Gastrocnemius medialis (tissue), 4 donors: ENCODE measurements at regions of chr11 and their contacts with region 1.

Region 1: DNA sequence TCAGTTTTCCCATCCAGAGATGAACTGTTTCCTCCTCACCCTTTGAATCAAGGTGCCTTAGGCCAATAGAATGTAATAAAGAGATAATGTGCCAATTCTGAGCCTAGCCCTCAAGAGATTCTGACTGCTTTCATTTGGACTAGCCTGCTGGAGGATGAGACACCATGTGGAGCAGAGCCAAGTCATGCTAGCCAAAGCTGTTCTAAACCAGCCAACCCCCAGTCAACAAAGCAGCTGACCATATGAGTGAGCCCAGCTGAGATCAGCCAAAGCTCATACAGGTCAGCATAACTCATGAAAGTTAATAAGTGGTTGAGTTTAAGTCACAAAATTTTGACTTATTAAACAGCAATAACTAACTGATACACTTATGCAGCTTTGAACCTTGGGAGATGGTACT is 66.7 kb upstream of the DBX1 start:
- DNase-seq: no peak
- ATAC-seq: no peak
- H3K4me3 ChIP-seq: no peak overlapping the region
- H3K27ac ChIP-seq: no peak overlapping the region
- H3K4me1 ChIP-seq: no peaks in the 10 kb centered on the region
- H3K27me3 ChIP-seq: no peaks in the 10 kb centered on the region
- CTCF ChIP-seq: no peak
- POLR2A ChIP-seq: no peak

Region 2: GRCh38 chr11:20203831-20204230 is 23.1 kb before region 1 on chr11:
- in situ Hi-C with region 1: no loop called
- intact Hi-C with region 1: loop called (anchors 1 kb)
- DNase-seq: no peak
- ATAC-seq: no peak
- H3K4me3 ChIP-seq: no peak overlapping the region
- H3K27ac ChIP-seq: no peak overlapping the region
- H3K4me1 ChIP-seq: no peaks in the 10 kb centered on the region
- H3K27me3 ChIP-seq: peaks cover 0 to 3% (median 0%) of the 10 kb centered on the region in 3 donors
- CTCF ChIP-seq: no peak
- POLR2A ChIP-seq: no peak